Activated CD4-positive, alpha-beta memory T cell treated with anti-CD3 and anti-CD28 coated beads for 36 hours (primary cell): ENCODE measurements at regions of chr13 and their contacts with region 1.

Region 1: DNA sequence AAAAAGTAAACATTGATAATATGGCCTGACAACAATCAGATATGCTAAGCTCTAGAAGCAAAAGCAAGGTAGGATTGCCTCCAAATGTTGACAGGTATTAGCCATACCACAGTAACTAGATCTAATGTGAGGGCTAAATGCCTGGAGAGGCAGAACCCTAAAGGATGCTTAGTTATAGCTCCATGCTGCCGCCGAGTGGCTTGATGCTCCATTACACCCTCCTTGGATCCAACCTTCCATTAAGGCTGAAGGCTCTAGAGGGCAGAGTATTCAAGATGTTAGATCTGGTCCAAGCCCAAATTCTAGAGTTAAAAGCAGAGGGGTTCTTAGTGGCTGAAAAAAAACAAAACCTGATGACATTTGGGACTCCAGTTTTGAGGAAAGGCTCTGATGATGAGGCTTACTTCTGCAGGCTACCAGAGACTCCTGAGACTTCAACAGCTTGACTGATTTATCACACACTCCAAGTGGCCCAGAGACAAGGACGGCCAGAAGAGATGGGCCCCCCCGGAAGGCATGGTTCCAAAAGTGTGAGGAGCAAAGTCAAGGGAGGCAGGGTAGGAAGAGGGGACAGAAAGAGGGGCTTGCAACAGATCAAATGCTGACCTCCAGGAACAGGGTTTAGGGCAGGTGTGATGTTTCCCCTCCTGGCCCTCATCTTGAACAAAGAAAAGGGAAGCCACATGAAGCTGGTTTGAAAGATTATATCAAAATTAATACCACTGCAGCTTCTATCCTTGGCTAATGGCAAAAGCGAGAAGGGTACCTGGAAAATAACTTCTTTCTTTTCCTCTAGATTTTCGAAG is 21.9 kb upstream of the CPB2 start:
- DNase-seq: peak; percentile 83
- H3K4me3 Mint-ChIP-seq: no peak overlapping the region
- H3K27ac Mint-ChIP-seq: peak overlapping the region; percentile 40
- H3K4me1 Mint-ChIP-seq: peaks cover 39% of the 10 kb centered on the region
- H3K27me3 Mint-ChIP-seq: no peaks in the 10 kb centered on the region

Region 2: GRCh38 chr13:45623515-45624090 is 503.2 kb before region 1 on chr13:
- CTCF ChIA-PET with region 1: interaction called, 4 read pairs
- POLR2A ChIA-PET with region 1: no interaction called
- intact Hi-C with region 1: loop called (anchors 5 kb)
- DNase-seq: no peak
- H3K4me3 Mint-ChIP-seq: no peak overlapping the region
- H3K27ac Mint-ChIP-seq: no peak overlapping the region
- H3K4me1 Mint-ChIP-seq: no peaks in the 10 kb centered on the region
- H3K27me3 Mint-ChIP-seq: peaks cover 39% of the 10 kb centered on the region

Region 3: DNA sequence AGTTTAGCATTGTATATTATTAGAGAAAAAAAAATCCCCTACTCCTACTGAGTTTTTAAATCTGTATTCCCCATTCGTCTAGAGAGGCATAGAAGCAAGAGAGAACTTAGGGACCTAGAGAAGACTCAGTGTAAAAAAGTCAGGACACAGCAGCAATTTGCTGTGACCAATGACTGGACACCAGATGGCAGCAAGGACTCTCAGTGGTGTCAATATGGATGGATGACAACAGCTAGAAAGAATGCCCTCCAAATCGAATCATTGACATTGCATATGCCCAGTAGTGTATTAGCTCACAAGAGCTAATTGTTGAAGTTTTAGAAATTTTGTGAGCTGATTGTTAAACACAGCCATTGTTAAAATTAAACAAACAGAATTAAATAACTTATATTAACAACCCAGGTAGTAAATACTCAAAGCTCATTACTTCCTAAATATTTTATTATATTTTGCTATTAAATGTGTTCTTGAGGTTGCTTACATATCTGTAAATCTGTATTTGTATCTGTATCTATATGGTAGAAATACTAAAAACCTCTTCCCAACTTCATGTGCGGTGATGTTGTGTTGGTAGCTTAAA is 319.1 kb before region 1 on chr13:
- CTCF ChIA-PET with region 1: interaction called, 5 read pairs
- POLR2A ChIA-PET with region 1: no interaction called
- intact Hi-C with region 1: loop called (anchors 5 kb)
- DNase-seq: peak; percentile 41
- H3K4me3 Mint-ChIP-seq: no peak overlapping the region
- H3K27ac Mint-ChIP-seq: no peak overlapping the region
- H3K4me1 Mint-ChIP-seq: peaks cover 3% of the 10 kb centered on the region
- H3K27me3 Mint-ChIP-seq: no peaks in the 10 kb centered on the region

Region 4: DNA sequence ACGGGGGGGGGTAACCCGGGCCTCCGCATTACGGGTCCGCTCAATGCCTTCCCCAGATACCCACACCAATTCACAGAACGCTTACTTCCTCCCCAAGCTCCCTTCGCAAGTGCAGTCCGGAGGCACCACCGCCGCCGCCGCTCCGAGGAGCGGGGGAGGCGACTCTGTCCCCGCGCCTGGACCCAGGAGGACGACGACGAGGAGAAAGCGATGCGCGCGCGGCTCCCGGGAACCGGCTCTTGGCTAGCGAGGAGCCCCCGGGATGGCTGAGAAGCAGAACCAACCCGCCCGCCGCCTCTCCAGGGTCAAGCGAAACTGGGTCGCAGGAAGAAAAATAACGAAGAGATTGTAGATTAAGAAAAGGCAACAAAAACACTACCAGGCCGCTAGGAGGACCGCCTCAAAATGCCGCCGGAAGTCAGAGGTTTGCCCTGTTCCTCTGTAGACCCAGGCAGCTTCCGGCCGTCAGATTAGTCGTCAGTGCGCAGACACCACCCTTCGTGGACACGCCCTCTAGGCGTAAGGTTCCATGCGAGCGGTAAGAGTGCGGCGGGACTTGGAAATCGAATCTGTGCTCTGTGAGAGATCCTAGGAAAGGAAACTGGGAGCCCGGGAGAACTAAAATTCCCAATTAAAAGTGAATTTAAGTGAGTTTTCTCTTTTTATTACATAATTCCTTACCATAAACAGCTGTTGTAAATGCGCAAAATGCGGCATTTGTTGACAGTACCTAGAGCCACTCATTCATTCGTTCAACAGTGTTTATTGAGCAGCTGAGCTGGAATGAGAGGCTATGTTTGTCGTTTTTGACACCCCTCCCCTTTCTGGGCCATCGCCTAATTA is 74.2 kb before region 1 on chr13 and contains the start of gene ZC3H13:
- CTCF ChIA-PET with region 1: interaction called, 5 read pairs
- POLR2A ChIA-PET with region 1: no interaction called
- intact Hi-C with region 1: loop called (anchors 1 kb)
- DNase-seq: peak; percentile 96
- H3K4me3 Mint-ChIP-seq: peak within 1 kb of the TSS; percentile 90
- H3K27ac Mint-ChIP-seq: peak within 1 kb of the TSS; percentile 93
- H3K4me1 Mint-ChIP-seq: peaks cover 28% of the 10 kb centered on the region
- H3K27me3 Mint-ChIP-seq: peaks cover 8% of the 10 kb centered on the region
- total RNA-seq, gene ZC3H13: 37.0 to 47.3 TPM

Region 5: GRCh38 chr13:46143184-46143701 is 16.5 kb after region 1 on chr13:
- CTCF ChIA-PET with region 1: interaction called, 17 read pairs
- POLR2A ChIA-PET with region 1: interaction called, 3 read pairs
- intact Hi-C with region 1: no loop called
- DNase-seq: no peak
- H3K4me3 Mint-ChIP-seq: no peak overlapping the region
- H3K27ac Mint-ChIP-seq: no peak overlapping the region
- H3K4me1 Mint-ChIP-seq: peaks cover 31% of the 10 kb centered on the region
- H3K27me3 Mint-ChIP-seq: no peaks in the 10 kb centered on the region

Region 6: DNA sequence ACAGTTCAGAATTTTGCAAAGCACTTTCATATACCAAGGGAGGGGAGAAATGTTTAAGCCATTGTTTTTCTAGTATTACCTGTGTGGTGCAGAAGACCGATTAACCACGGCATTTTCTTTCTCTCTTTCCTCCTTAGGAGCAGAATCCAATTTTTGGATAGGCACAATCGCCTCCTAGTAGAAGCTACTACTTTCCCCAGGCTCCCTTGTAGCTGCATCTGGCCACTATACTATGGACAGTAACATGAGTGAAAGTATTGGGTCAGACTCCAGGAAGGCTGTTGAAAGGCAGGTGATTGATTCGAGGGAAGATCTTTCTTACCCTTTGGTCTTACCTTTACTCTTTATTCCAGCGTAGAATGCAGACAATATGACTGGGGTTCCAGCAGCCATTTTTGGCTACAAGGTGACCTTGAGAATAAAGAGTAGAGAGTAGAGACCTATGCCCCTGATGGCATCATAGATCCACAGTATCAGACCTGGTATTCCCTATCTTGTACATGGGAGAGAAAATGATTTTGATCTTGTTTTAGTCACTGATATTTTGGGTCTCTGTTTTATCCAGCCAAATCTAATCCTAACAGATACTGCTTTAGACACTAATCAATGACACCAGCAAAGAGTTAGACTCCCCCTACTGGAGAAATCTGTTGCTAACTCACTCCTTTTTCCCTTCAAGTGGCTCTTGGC is 162.0 kb after region 1 on chr13:
- CTCF ChIA-PET with region 1: interaction called, 6 read pairs
- POLR2A ChIA-PET with region 1: no interaction called
- intact Hi-C with region 1: loop called (anchors 1 kb)
- DNase-seq: no peak
- H3K4me3 Mint-ChIP-seq: no peak overlapping the region
- H3K27ac Mint-ChIP-seq: no peak overlapping the region
- H3K4me1 Mint-ChIP-seq: peaks cover 22% of the 10 kb centered on the region
- H3K27me3 Mint-ChIP-seq: no peaks in the 10 kb centered on the region